Mammary epithelial cell (primary cell): ENCODE measurements at regions of chr11 and their contacts with region 1.

Region 1: GRCh38 chr11:110195845-110196754 is 100.3 kb downstream of the RDX start:
- DNase-seq: peak; percentile 94
- H3K4me3 ChIP-seq: no peak overlapping the region
- H3K27ac ChIP-seq: peak overlapping the region; percentile 95
- H3K4me1 ChIP-seq: peaks cover 64% of the 10 kb centered on the region
- H3K27me3 ChIP-seq: no peaks in the 10 kb centered on the region
- CTCF ChIP-seq: no peak

Region 2: GRCh38 chr11:108697872-108698473 is 1498.1 kb before region 1 on chr11:
- CTCF ChIA-PET with region 1: no interaction called
- dilution Hi-C with region 1: no loop called
- in situ Hi-C with region 1: no loop called
- intact Hi-C with region 1: loop called (anchors 10 kb)
- DNase-seq: peak; percentile 61
- H3K4me3 ChIP-seq: no peak overlapping the region
- H3K27ac ChIP-seq: peak overlapping the region; percentile 65
- H3K4me1 ChIP-seq: peaks cover 27% of the 10 kb centered on the region
- H3K27me3 ChIP-seq: no peaks in the 10 kb centered on the region
- CTCF ChIP-seq: peak; percentile 99

Region 3: GRCh38 chr11:109946322-109946846 is 249.7 kb before region 1 on chr11:
- CTCF ChIA-PET with region 1: no interaction called
- dilution Hi-C with region 1: no loop called
- in situ Hi-C with region 1: loop called in 1 of 2 experiments (anchors 25 kb)
- intact Hi-C with region 1: loop called (anchors 1 kb)
- DNase-seq: peak; percentile 87
- H3K4me3 ChIP-seq: peak overlapping the region; percentile 18 to 35 (median 29)
- H3K27ac ChIP-seq: peak overlapping the region; percentile 95
- H3K4me1 ChIP-seq: peaks cover 4% of the 10 kb centered on the region
- H3K27me3 ChIP-seq: no peaks in the 10 kb centered on the region
- CTCF ChIP-seq: peak; percentile 95 to 99

Region 4: DNA sequence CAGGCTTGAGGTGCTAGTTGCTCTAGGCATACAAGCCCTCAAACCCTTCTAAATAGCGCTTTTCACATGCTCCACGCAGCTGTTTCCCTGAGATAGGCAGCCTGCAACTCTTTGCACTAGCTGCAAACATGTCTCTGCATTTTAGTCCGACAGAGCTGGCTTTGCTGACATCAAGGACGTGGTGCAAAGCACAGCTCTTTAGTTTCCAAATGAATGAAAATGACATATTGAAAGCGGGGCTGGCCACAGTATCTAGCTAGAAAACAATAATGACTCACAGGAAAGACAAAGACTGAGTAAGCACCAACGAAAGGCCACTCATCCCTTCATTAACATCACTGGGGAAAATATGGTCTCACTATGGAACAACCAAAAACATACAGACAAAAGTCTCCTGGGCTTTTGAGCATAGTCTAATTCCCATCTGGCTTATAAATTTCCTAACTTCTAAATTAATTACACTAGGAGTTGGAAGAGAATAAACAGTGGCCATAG is 118.2 kb before region 1 on chr11:
- CTCF ChIA-PET with region 1: no interaction called
- dilution Hi-C with region 1: no loop called
- in situ Hi-C with region 1: no loop called
- intact Hi-C with region 1: no loop called
- DNase-seq: peak; percentile 91
- H3K4me3 ChIP-seq: no peak overlapping the region
- H3K27ac ChIP-seq: peak overlapping the region; percentile 86
- H3K4me1 ChIP-seq: peaks cover 40% of the 10 kb centered on the region
- H3K27me3 ChIP-seq: no peaks in the 10 kb centered on the region
- CTCF ChIP-seq: no peak

Region 5: GRCh38 chr11:110092515-110093404 is 103.3 kb before region 1 on chr11 and contains the start of gene ZC3H12C:
- CTCF ChIA-PET with region 1: no interaction called
- dilution Hi-C with region 1: no loop called
- in situ Hi-C with region 1: no loop called
- intact Hi-C with region 1: loop called (anchors 2 kb)
- DNase-seq: peak; percentile 95
- H3K4me3 ChIP-seq: peak within 1 kb of the TSS; percentile 73 to 87 (median 74)
- H3K27ac ChIP-seq: peak within 1 kb of the TSS; percentile 90
- H3K4me1 ChIP-seq: peaks cover 39% of the 10 kb centered on the region
- H3K27me3 ChIP-seq: no peaks in the 10 kb centered on the region
- CTCF ChIP-seq: peak; percentile 8 to 62
- total RNA-seq, gene ZC3H12C: 16.0 to 26.9 TPM

Region 6: DNA sequence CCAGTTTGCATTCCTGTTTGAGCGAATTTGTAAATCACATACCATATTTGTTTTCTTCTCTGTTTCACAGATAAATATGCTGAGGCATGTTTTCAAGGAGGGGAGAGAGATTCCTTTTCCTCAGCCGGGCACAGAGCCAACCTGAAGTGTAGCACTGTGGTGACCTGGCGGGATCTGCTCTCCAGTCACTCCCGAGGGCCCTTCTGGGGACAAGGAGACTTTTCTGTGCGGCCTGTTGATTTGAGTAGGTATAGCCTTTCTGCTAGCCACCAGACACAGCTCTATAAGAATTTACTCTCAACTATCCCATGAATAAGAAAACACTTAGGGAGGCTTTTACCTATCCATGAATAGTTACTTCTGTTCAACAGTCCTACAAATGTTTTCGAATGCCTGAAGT is 170.2 kb after region 1 on chr11:
- CTCF ChIA-PET with region 1: interaction called, 27 read pairs
- dilution Hi-C with region 1: no loop called
- in situ Hi-C with region 1: loop called (anchors 5 to 10 kb)
- intact Hi-C with region 1: loop called (anchors 1 kb)
- DNase-seq: peak; percentile 35
- H3K4me3 ChIP-seq: no peak overlapping the region
- H3K27ac ChIP-seq: no peak overlapping the region
- H3K4me1 ChIP-seq: peaks cover 9% of the 10 kb centered on the region
- H3K27me3 ChIP-seq: no peaks in the 10 kb centered on the region
- CTCF ChIP-seq: no peak

Region 7: GRCh38 chr11:110430267-110431050 is 234.4 kb after region 1 on chr11:
- CTCF ChIA-PET with region 1: no interaction called
- dilution Hi-C with region 1: no loop called
- in situ Hi-C with region 1: no loop called
- intact Hi-C with region 1: loop called (anchors 1 kb)
- DNase-seq: peak; percentile 74
- H3K4me3 ChIP-seq: peak overlapping the region; percentile 60 to 93 (median 90)
- H3K27ac ChIP-seq: peak overlapping the region; percentile 67
- H3K4me1 ChIP-seq: peaks cover 17% of the 10 kb centered on the region
- H3K27me3 ChIP-seq: no peaks in the 10 kb centered on the region
- CTCF ChIP-seq: no peak